ENCODE measurements at regions of chr10 and their contacts with region 1.

Region 1: DNA sequence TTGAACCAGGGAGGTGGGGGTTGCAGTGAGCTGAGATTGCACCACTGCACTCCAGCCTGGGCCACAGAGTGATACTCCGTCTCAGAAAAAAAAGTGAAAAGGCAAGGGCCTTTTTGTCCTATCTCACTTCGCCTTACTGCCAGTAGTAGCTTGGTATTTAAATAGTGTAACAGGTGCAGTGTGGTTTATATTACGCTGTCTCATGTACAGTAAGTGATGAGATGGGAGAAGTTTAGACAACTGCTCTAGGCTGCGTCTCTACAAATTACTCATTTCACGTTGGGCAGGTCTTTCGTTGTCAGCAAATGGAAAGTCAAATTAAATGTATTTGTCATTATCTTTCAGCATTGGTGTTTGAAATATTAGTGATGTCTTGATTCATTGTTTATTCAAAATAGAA is 15.5 kb upstream of the PFKFB3 start:
- DNase-seq: no peak
- H3K4me3 Mint-ChIP-seq: no peak overlapping the region
- H3K27ac Mint-ChIP-seq: no peak overlapping the region
- H3K4me1 Mint-ChIP-seq: peaks cover 42% of the 10 kb centered on the region
- H3K27me3 Mint-ChIP-seq: no peaks in the 10 kb centered on the region

Region 2: DNA sequence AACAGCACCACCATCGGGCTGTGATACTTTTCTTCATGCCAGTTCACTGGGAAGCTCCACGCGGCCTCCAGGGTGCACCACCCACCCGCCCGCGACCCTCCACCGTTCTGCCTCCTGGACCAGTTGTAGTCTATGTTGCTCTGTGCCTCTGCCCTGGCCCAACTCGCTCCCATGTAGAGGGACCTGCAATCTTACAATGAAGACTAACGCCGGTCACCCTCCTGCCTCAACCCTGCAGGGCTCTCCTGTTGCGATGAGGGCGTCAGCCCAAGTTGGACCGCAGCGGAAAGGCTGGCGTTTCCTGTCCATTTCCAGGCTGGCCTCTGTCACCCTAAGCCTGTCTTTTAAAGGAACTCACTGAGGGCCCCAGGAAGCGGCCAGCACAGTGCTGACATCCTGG is 244.8 kb before region 1 on chr10:
- intact Hi-C with region 1: no loop called
- DNase-seq: no peak
- H3K4me3 Mint-ChIP-seq: no peak overlapping the region
- H3K27ac Mint-ChIP-seq: no peak overlapping the region
- H3K4me1 Mint-ChIP-seq: peaks cover 7% of the 10 kb centered on the region
- H3K27me3 Mint-ChIP-seq: no peaks in the 10 kb centered on the region

Region 3: DNA sequence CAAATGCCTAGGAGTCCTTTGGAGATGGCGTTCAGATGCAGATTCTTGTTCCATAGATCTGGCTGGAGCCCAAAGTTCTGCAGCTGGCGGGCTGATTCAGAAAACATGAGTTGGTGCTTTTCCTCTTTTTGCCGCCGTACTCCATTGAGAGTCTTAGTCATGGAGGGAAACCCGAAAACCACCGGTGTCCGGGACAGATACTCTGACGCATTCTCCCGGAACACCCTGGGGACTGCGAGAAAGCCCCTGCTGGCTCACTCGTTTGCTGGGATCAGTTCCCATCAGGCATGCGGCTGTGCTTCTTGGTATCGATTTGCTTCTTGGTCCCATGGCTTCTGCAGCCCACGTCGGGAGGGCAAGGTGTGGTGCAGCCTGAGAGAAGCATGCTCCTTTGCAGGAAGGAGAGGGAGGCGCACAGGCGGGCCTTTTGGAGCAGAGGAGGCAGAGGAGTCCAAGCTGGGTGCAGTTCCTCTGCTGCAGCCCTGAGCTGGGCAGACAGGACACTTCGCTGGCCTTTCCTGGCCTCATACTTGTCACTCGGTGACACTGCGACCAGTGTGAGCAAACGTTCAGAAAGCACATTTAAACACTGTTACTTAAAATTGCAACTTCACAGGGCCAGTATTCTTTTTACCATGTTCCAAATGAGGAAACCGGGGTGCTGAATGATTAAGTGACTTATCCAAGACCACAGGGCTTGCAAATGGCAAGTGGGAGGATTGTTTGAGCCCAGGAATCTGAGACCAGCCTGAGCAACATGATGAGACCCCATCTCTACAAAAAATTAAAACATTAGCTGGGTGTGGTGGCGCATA is 15.2 kb before region 1 on chr10:
- intact Hi-C with region 1: loop called (anchors 2 kb)
- DNase-seq: no peak
- H3K4me3 Mint-ChIP-seq: peak overlapping the region; percentile 23
- H3K27ac Mint-ChIP-seq: peak overlapping the region; percentile 55
- H3K4me1 Mint-ChIP-seq: peaks cover 61% of the 10 kb centered on the region
- H3K27me3 Mint-ChIP-seq: no peaks in the 10 kb centered on the region

Region 4: DNA sequence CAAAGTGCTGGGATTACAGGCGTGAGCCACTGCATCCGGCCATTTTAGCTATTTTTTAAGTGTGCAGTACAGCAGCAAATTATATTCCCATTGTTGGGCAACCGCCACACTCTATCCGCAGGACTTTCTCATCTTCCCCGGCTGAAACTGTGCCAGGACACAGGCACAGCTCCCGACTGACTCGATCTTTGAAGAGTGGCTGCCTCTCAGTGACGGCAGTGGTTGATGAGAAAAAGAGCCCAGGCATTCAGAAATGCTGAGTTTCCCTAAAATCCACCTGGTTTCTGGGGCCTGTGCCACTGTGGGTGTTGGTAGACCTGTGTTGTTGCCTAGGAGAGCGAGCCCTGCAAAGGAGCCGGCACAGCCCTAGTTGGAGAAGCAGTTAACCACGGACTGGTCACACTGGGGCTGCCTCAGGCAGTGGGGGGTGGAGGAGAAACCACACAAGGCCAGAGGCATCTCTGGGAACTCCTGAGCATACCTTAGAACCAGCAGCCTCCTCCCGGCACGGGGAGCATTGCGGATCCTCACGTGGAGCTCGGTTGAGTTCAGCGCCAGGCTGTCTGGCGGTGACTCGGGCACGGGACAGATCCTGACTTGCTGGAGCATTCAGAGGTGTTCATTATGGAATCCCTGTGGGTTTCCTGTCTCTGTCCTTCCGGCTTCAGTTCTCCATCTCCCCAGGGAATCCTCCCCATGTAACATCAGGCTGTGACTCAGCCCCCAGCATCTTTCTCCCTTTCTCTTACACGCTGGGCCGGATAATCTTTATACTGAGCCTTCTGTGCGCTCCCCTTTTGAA is 31.6 kb after region 1 on chr10:
- intact Hi-C with region 1: no loop called
- DNase-seq: no peak
- H3K4me3 Mint-ChIP-seq: no peak overlapping the region
- H3K27ac Mint-ChIP-seq: no peak overlapping the region
- H3K4me1 Mint-ChIP-seq: no peaks in the 10 kb centered on the region
- H3K27me3 Mint-ChIP-seq: no peaks in the 10 kb centered on the region